ENCODE measurements at regions of chr16 and their contacts with region 1.

Region 1: GRCh38 chr16:49350265-49351095 is 23.1 kb upstream of the C16orf78 start:
- DNase-seq: peak; percentile 52
- H3K4me3 ChIP-seq: no peak overlapping the region
- H3K27ac ChIP-seq: no peak overlapping the region
- H3K4me1 ChIP-seq: no peaks in the 10 kb centered on the region
- H3K27me3 ChIP-seq: peaks cover 94% of the 10 kb centered on the region
- CTCF ChIP-seq: peak; percentile 84

Region 2: GRCh38 chr16:48687421-48688038 is 663.0 kb before region 1 on chr16:
- intact Hi-C with region 1: loop called (anchors 5 kb)
- DNase-seq: peak; percentile 32
- H3K4me3 ChIP-seq: no peak overlapping the region
- H3K27ac ChIP-seq: no peak overlapping the region
- H3K4me1 ChIP-seq: peaks cover 3% of the 10 kb centered on the region
- H3K27me3 ChIP-seq: peaks cover 12% of the 10 kb centered on the region
- CTCF ChIP-seq: peak; percentile 88

Measured in left ventricle myocardium inferior (tissue), 1 donor.